A673 (cell line): ENCODE measurements at regions of chr17 and their contacts with region 1.

Region 1: DNA sequence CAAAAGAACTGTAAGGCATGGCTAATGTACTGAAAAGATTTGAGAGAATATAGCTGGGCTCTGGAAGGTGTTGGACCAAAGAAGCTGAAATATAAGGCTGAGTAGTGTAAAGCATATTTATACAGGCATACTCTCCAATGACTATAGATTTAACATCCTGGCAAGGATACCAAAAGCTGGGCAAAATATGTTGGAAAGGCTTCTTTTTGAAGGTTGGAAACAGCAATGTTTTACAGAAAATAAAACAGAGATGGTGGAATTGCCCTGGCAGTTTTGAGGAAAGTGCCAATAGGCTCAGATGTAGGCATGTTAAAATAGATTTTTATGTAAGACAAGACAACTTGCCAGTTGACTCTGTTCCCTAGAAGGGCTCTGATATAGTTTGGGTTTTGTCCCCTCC is 184.1 kb upstream of the SHISA6 start:
- DNase-seq: no peak
- H3K4me3 ChIP-seq: no peak overlapping the region
- H3K27ac ChIP-seq: no peak overlapping the region
- H3K4me1 ChIP-seq: no peaks in the 10 kb centered on the region
- H3K27me3 ChIP-seq: no peaks in the 10 kb centered on the region
- CTCF ChIP-seq: no peak

Region 2: DNA sequence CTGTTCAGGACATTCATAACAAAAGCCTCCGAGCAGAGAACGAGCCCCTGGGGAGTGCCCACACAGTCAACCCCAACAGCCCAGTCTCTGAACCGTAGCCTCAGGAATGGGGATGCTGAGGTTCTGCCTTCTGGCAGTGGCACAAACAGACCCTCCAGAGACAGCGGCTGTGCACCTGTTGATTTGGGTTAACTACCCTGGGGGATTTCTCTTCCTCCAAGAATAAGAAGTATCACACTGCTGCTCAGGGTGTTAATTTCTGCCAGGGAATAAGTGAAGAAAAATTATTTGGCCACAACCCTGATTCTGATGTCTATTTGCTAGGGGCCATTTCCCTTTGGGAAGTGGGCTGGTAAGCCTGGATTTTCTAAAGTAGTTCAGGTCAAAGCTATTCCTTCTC is 168.1 kb before region 1 on chr17:
- CTCF ChIA-PET with region 1: no interaction called
- POLR2A ChIA-PET with region 1: no interaction called
- intact Hi-C with region 1: loop called (anchors 5 kb)
- DNase-seq: no peak
- H3K4me3 ChIP-seq: no peak overlapping the region
- H3K27ac ChIP-seq: no peak overlapping the region
- H3K4me1 ChIP-seq: no peaks in the 10 kb centered on the region
- H3K27me3 ChIP-seq: no peaks in the 10 kb centered on the region
- CTCF ChIP-seq: no peak